AG04449 (cell line): ENCODE measurements at regions of chr7 and their contacts with region 1.

Region 1: GRCh38 chr7:5494683-5495561 is 71.3 kb upstream of the TNRC18 start:
- DNase-seq: no peak
- H3K4me3 ChIP-seq: no peak overlapping the region
- CTCF ChIP-seq: peak; percentile 94

Region 2: DNA sequence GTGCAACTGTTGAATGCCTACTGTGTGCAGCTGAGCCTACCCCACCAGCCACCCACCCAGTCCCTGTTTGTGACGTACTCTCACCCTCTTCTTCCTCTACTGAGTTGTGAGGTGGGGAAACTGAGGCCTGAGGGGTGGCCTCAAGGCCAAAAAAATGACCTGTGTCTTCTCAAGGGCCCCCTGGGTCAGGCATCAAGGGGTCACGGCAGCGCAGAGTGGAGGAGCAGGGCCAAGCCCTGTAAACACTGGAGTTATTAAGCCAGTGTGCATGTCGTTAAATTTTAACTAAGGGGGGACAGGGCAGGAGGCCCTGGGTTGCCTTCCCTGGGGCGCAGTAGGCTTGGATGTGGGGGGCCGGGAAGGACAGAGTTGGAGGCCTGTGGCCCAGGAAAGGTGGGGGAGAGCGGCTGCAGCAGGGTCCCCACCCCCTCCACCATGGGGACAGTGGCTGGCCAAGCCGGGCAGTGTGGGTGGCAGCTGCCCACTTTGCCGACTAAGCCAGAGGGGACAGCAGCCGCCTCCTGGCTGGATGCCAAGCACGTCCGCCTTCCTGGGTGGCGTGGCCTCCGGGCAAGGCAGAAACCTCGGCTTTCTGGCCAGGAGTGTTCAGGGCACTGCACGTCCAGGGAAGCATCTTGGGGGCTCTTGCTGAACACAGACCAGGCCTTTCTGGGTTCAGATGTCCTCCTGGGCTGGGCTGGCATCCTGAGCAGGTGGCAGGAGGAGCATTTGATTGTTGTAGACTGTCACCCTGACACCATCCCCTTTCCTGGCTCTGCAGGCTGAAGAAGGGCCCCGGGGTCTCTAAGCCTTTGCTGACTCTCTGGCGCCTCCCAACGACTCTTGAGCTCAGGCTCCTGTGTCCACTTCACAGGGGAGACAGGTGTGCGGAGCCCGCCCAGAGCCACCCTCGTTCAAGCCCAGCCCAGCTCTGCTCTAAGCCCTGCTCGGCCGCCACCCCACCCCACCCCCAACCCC is 210.3 kb before region 1 on chr7:
- CTCF ChIA-PET with region 1: no interaction called
- POLR2A ChIA-PET with region 1: no interaction called
- DNase-seq: no peak
- H3K4me3 ChIP-seq: no peak overlapping the region
- CTCF ChIP-seq: peak; percentile 42

Region 3: GRCh38 chr7:5477723-5478531 is 17.0 kb before region 1 on chr7:
- CTCF ChIA-PET with region 1: interaction called, 23 read pairs
- POLR2A ChIA-PET with region 1: interaction called, 3 read pairs
- DNase-seq: no peak
- H3K4me3 ChIP-seq: no peak overlapping the region
- CTCF ChIP-seq: peak; percentile 36

Region 4: DNA sequence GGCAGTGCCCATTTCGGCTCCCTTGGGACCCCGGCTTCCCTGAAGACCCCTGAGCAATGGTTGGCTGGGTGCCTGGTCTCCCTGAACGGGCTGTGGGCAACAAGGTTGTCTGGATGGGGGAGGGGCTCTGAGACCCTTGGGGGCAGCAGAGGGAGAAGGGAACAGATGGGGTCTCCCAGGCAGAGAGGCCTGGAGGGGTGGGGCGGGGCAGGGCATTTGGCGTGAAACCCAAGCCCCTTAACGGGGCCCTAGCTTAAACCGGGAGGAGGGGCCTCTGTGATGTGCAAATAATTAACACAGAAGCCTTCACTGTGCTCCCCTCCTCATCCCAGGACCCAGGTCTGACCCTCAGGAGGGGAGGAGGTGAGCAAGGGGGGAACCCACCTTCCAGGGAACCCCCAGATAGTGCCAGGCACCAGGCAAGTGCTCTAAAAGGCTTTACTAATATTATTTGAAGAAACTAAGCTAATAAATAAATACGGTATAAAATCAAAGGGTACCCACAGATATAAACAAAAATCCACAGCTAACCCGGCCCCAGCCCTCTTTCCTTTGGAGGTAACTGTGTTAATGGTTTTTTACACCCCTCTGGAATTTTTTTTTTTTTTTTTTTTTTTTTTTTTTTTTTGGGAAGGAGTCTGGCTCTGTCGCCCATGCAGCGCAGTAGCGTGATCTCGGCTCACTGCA is 115.7 kb after region 1 on chr7:
- CTCF ChIA-PET with region 1: interaction called, 10 read pairs
- POLR2A ChIA-PET with region 1: no interaction called
- DNase-seq: no peak
- H3K4me3 ChIP-seq: no peak overlapping the region
- CTCF ChIP-seq: no peak

Region 5: DNA sequence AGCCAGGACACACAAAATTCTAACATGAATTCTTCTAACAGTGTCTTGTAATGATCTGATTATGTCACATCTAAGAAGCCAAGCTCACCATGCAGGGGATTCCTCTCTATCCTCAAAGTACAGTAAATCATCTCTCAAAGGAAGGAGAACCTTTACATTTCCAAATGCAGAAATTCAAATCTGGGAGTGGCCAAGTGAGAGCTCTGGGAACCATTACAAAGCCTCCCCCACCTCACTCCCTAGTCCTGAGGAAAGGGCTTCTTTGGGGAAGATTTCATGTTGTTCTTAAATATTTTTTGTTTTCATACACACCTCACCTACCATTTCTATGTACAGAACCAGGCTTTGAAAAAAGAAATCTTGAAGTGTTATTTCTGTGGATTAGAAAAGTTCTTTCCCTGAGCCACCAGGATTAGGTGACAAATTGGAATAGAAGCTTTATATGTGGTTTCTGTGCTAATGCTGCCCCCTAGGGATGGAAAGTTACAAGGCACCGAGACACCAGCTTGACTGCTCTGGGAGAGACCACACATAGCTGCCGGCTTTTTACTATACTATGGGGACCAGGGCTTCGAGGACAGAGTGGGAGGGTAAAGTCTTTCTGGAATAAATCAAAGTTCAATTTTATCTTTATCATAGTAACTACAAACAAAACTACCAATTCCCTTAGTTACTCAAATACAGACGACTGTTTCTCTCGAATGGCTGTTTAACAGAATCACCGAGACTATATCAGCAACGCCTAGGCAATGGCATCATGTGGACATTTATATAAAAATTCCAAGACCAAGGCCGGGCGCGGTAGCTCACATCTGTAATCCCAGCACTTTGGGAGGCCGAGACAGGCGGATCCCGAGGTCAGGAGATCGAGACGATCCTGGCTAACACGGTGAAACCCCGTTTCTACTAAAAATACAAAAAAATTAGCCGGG is 170.4 kb after region 1 on chr7:
- CTCF ChIA-PET with region 1: interaction called, 80 read pairs
- POLR2A ChIA-PET with region 1: interaction called, 3 read pairs
- DNase-seq: no peak
- H3K4me3 ChIP-seq: no peak overlapping the region
- CTCF ChIP-seq: peak; percentile 70

Region 6: DNA sequence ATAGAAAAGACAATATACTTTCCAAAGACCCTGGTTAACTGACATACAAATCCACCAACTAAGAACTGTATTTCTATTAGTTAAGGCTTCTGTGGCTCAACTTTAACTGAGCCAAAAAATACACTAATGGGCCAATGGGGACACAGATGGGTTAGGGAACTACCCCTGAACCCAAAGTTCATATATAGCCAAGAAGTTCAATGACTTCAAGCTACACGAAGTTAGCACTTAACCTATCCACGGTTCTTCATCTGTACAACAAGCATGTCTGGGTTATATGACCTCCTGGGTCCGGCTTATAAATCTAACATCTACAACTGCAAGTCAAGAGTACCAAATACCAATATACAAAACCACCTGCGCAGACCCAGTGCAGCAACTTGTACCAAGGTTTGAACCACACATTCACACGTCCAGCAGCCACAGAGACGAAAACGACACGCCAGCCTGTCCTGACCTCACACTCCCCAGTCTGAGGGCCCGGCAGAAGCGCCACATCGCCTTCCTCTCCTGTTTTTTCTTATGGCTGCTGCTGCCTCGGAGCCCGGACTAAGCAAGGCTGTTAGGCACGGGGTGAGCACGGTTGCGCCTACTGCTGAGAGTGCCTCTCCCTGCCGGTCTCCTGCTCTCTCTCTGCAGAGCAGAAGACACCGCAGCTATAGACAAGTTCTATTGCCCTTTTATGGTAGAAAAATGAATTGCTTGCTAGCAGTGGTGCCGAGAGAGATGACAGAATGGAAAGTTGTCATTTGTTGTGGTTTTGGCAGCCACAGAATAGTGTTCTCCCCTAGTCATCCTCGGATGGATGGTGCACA is 200.2 kb after region 1 on chr7:
- CTCF ChIA-PET with region 1: interaction called, 59 read pairs
- POLR2A ChIA-PET with region 1: no interaction called
- DNase-seq: peak; percentile 88
- H3K4me3 ChIP-seq: peak overlapping the region; percentile 61
- CTCF ChIP-seq: no peak

Region 7: DNA sequence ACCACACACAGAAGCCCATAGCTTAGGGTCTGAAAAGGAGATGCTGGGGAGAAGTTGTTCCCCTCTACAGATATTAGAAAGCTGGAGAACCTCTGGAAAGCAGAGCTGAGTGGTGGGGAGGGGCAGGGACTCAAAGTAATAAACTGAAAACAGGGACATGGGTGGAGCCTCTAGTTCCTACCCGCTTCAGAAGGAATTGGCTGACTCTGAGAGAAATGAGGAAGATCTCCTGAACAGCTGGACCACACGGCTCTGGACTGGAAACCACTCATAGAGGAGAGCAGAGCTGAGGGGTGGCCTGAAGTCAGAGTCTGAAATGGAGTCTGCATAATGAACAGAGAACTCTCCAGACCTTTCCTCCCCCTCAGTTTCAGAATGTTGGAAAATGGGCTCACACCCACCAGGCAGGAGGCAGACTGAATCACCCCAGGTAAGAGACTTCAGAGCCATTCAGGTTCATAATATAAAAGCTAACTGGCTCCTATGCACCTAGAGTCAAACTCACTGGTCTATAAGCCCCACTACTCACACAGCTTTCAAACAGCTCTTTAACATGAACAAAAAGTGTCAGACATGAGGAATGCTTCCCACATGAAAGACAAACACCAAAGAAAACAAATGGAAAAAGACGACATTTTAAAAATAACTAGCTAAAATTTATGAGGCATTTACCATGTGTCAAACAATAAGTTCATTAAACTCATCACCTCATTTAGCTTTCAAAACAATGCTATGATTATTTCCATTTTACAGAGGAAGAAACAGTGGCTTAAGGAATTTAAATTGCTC is 218.4 kb after region 1 on chr7:
- CTCF ChIA-PET with region 1: interaction called, 19 read pairs
- POLR2A ChIA-PET with region 1: no interaction called
- DNase-seq: no peak
- H3K4me3 ChIP-seq: no peak overlapping the region
- CTCF ChIP-seq: no peak